Activated CD4-positive, alpha-beta memory T cell treated with anti-CD3 and anti-CD28 coated beads for 36 hours (primary cell): ENCODE measurements at regions of chr6 and their contacts with region 1.

Region 1: GRCh38 chr6:97059473-97059872 is 134.9 kb downstream of the KLHL32 start:
- DNase-seq: no peak
- H3K4me3 Mint-ChIP-seq: no peak overlapping the region
- H3K27ac Mint-ChIP-seq: no peak overlapping the region
- H3K4me1 Mint-ChIP-seq: no peaks in the 10 kb centered on the region
- H3K27me3 Mint-ChIP-seq: no peaks in the 10 kb centered on the region

Region 2: GRCh38 chr6:95203153-95203754 is 1856.2 kb before region 1 on chr6:
- CTCF ChIA-PET with region 1: no interaction called
- POLR2A ChIA-PET with region 1: no interaction called
- intact Hi-C with region 1: loop called (anchors 5 kb)
- DNase-seq: no peak
- H3K4me3 Mint-ChIP-seq: no peak overlapping the region
- H3K27ac Mint-ChIP-seq: no peak overlapping the region
- H3K4me1 Mint-ChIP-seq: no peaks in the 10 kb centered on the region
- H3K27me3 Mint-ChIP-seq: no peaks in the 10 kb centered on the region

Region 3: GRCh38 chr6:95431637-95432228 is 1627.7 kb before region 1 on chr6:
- CTCF ChIA-PET with region 1: interaction called, 3 read pairs
- POLR2A ChIA-PET with region 1: no interaction called
- intact Hi-C with region 1: loop called (anchors 2 kb)
- DNase-seq: peak; percentile 31
- H3K4me3 Mint-ChIP-seq: no peak overlapping the region
- H3K27ac Mint-ChIP-seq: no peak overlapping the region
- H3K4me1 Mint-ChIP-seq: no peaks in the 10 kb centered on the region
- H3K27me3 Mint-ChIP-seq: no peaks in the 10 kb centered on the region

Region 4: GRCh38 chr6:96542702-96543101 is 516.8 kb before region 1 on chr6:
- CTCF ChIA-PET with region 1: interaction called, 11 read pairs
- POLR2A ChIA-PET with region 1: no interaction called
- intact Hi-C with region 1: no loop called
- DNase-seq: no peak
- H3K4me3 Mint-ChIP-seq: no peak overlapping the region
- H3K27ac Mint-ChIP-seq: no peak overlapping the region
- H3K4me1 Mint-ChIP-seq: no peaks in the 10 kb centered on the region
- H3K27me3 Mint-ChIP-seq: no peaks in the 10 kb centered on the region

Region 5: DNA sequence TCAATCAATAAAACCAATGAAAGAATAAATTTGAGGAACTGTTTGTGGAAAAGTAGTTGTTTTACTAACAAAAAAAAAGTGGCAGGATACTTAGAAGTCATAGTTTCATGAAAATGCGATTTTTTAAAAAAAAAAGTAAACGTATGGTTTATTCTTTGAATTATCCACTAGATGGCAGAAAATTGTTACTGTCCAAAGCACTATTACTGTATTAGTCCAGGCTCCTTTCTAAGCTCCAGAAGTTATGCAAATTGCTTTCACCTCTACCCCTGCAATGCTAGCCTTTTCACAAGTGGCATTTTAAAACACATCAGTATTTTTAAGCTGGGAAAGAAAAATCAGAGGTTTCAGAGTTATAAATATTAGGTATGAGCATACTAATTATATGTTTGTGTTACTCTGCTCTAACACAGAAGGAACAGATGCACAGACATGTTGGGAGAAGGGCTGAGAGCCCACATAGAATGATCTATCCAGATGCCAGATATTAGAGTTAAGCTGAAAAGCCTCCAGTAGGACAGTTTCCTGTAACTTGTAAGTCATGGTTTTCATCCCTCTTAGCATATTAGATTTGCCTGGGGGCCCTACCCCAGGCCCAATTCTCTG is 432.6 kb before region 1 on chr6:
- CTCF ChIA-PET with region 1: interaction called, 32 read pairs
- POLR2A ChIA-PET with region 1: no interaction called
- intact Hi-C with region 1: loop called (anchors 1 kb)
- DNase-seq: no peak
- H3K4me3 Mint-ChIP-seq: no peak overlapping the region
- H3K27ac Mint-ChIP-seq: no peak overlapping the region
- H3K4me1 Mint-ChIP-seq: no peaks in the 10 kb centered on the region
- H3K27me3 Mint-ChIP-seq: peaks cover 6% of the 10 kb centered on the region

Region 6: DNA sequence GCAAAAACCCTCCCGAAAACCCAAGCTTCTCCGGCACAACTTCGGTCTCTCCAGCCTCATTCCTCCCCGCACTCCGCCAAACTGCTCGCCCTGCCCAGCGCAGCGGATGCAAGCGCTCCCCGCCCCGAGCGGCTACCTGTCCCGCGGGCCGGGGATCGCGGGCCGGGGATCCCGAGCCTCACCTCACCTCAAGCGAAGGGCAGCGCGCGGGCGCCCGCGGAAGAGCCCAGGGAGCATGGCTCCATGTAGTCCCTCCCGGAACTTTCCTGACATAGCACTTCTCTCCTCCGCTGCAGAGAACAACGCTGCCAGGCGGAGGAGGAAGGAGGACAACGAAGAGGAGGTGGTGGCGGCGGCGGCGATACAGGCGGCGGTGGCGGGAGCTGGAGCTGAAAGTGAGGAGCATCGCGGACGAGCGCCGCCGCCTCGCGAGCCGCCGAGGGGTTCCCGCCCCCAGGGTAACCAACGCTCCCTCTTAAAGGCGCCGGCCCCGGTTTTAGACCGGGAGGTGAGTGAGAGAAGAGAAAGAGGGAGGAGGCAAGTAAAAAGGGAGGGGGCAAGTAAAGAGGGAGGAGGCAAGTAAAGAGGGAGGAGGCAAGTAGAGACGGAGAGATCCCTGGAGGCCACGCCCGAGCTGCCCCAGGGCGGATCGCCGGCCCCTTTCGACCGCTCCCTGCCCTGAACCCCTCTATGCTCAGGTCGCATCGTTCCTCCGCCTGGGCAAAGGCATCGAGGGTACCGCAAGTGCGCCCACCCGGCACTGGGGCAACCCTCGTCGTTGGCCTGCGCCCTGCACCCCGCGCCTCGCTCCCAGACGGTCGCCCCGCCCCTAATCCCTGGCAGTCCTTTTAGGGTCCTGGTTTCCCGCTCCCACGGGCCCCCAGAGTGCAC is 222.1 kb before region 1 on chr6 and contains the start of gene GPR63:
- CTCF ChIA-PET with region 1: no interaction called
- POLR2A ChIA-PET with region 1: no interaction called
- intact Hi-C with region 1: loop called (anchors 2 kb)
- DNase-seq: peak; percentile 87
- H3K4me3 Mint-ChIP-seq: peak within 1 kb of the TSS; percentile 95
- H3K27ac Mint-ChIP-seq: peak within 1 kb of the TSS; percentile 50
- H3K4me1 Mint-ChIP-seq: peaks cover 17% of the 10 kb centered on the region
- H3K27me3 Mint-ChIP-seq: peaks cover 16% of the 10 kb centered on the region
- total RNA-seq, gene GPR63: 1.5 to 1.7 TPM

Region 7: GRCh38 chr6:97215157-97215769 is 155.8 kb after region 1 on chr6:
- CTCF ChIA-PET with region 1: no interaction called
- POLR2A ChIA-PET with region 1: no interaction called
- intact Hi-C with region 1: no loop called
- DNase-seq: no peak
- H3K4me3 Mint-ChIP-seq: no peak overlapping the region
- H3K27ac Mint-ChIP-seq: no peak overlapping the region
- H3K4me1 Mint-ChIP-seq: no peaks in the 10 kb centered on the region
- H3K27me3 Mint-ChIP-seq: no peaks in the 10 kb centered on the region